ENCODE measurements at regions of chr15 and their contacts with region 1.

Region 1: GRCh38 chr15:84929744-84930371 is 45.4 kb downstream of the SLC28A1 start:
- DNase-seq: no peak
- H3K4me3 ChIP-seq: no peak overlapping the region
- H3K27ac ChIP-seq: no peak overlapping the region
- H3K4me1 ChIP-seq: no peaks in the 10 kb centered on the region
- H3K27me3 ChIP-seq: no peaks in the 10 kb centered on the region
- CTCF ChIP-seq: no peak
- POLR2A ChIP-seq: no peak

Region 2: DNA sequence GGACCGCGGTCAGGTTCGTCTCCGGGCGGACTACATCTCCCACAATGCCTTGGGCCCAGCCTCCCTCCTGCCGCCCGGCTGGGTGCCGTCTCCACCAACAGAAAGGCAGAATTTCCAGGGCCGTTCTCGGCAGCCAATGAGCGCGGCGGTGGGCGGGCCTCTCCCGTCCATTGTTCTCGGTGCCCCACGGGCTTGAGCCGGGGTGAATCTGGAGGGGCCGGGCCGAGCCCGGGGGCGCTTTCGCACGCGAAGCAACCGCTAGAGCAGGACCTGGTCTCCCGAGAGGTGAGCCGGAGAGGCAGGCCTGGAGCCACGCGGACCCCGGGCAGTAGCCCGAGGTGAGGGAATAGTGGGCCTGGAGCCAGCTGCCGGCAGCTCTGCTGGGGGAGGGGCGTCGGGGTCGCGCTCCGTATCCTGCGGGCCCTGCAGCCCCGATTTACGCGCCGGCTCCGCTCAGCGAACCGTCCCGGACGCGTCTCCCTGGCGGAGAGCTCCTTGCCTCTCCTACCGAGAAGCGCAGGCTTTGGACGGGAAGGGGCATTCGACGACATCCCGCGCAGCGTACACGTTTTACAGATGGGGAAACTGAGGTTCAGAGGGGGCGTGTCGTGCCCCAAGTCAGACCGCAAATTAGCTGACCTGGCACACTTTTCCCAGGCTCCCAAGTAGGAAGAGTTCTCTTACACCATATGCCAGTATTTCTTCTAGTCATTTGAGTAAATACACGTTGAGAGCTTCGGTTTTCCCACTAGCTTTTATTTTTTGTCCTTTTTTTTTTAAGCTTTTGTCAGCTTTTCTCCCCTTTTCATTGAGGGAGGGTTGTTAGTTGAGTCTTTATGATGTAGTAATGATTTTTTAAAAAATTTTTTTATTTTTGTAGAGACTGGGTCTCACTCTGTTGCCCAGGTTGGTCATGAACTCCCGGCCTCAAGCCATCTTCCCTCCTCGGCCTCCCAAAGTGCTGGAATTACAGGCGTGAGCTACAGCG is 328.7 kb before region 1 on chr15 and contains the start of gene ZSCAN2:
- intact Hi-C with region 1: loop called (anchors 5 kb)
- DNase-seq: peak; percentile 94
- H3K4me3 ChIP-seq: peak within 1 kb of the TSS; percentile 75 to 94
- H3K27ac ChIP-seq: peak within 1 kb of the TSS; percentile 69 to 70
- H3K4me1 ChIP-seq: no peaks in the 10 kb centered on the region
- H3K27me3 ChIP-seq: no peaks in the 10 kb centered on the region
- CTCF ChIP-seq: no peak
- POLR2A ChIP-seq: peak in 1 of 2 donors; percentile 53
- total RNA-seq, gene ZSCAN2: 0.59 to 30.0 (median 5.3) TPM